ENCODE measurements at regions of chr6 and their contacts with region 1.

Region 1: GRCh38 chr6:25070547-25071366 is 135.0 kb upstream of the RIPOR2 start:
- DNase-seq: peak; percentile 71 to 93 (median 76)
- ATAC-seq: peak; percentile 99
- H3K4me3 ChIP-seq: no peak overlapping the region
- H3K4me3 Mint-ChIP-seq: peak overlapping the region; percentile 14
- H3K27ac ChIP-seq: no peak overlapping the region
- H3K27ac Mint-ChIP-seq: peak overlapping the region; percentile 75
- H3K4me1 ChIP-seq: peaks cover 4% of the 10 kb centered on the region
- H3K4me1 Mint-ChIP-seq: peaks cover 10% of the 10 kb centered on the region
- H3K27me3 ChIP-seq: no peaks in the 10 kb centered on the region
- H3K27me3 Mint-ChIP-seq: no peaks in the 10 kb centered on the region
- CTCF ChIP-seq: peak; percentile 98

Region 2: GRCh38 chr6:24774696-24775519 is 295.8 kb before region 1 on chr6 and contains the start of gene GMNN:
- CTCF ChIA-PET with region 1: interaction called, 3 read pairs
- POLR2A ChIA-PET with region 1: no interaction called
- intact Hi-C with region 1: loop called in 1 of 2 experiments (anchors 5 kb)
- DNase-seq: peak; percentile 95 to 99 (median 97)
- ATAC-seq: peak; percentile 83
- H3K4me3 ChIP-seq: peak within 1 kb of the TSS; percentile 99
- H3K4me3 Mint-ChIP-seq: peak within 1 kb of the TSS; percentile 99
- H3K27ac ChIP-seq: peak within 1 kb of the TSS; percentile 87 to 94
- H3K27ac Mint-ChIP-seq: peak within 1 kb of the TSS; percentile 99
- H3K4me1 ChIP-seq: peaks cover 15% of the 10 kb centered on the region
- H3K4me1 Mint-ChIP-seq: peaks cover 32% of the 10 kb centered on the region
- H3K27me3 ChIP-seq: no peaks in the 10 kb centered on the region
- H3K27me3 Mint-ChIP-seq: no peaks in the 10 kb centered on the region
- CTCF ChIP-seq: no peak
- total RNA-seq, gene GMNN: 10.1 to 10.5 TPM

Region 3: DNA sequence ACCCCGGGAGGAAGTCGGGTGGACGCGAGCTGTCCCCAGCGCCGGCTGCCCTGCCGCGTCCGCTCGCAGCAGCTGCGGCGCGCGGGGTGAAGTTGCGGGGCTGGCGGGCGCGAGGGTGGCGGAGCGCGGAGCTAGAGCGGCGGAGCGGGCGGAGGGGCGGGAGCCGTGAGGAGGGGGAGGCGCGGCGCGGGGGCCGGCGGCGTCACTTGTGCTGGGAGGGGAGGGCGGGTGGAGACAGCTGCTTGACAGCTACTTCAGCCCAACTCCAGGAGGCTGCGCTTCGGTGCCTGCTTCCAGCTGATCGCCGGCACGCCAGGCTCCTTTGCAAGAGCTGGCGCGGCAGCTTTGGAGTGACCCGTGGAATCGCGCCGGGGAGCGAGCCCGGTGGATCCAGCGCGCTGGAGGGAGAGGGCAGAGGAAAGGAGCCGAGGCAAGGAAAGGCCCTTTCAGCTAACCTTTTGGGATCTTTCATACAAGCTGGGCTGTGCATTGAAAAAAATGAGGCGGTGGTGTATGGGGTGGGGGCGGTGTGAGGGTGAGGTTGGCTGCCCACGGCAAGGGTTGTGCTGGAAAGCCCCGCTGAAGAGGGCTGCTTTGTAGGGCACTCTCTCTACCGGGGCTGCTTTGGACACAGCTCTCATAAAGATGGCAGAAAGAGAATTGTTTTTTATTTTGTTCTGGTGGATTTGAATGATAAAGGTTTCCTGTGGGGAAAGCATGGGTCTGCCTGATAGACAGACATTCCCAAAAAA is 159.6 kb before region 1 on chr6:
- CTCF ChIA-PET with region 1: interaction called, 4 read pairs
- POLR2A ChIA-PET with region 1: no interaction called
- intact Hi-C with region 1: loop called in 1 of 2 experiments (anchors 10 kb)
- DNase-seq: peak in 13 of 14 experiments; percentile 27 to 79 (median 58)
- ATAC-seq: peak; percentile 46
- H3K4me3 ChIP-seq: peak overlapping the region; percentile 65
- H3K4me3 Mint-ChIP-seq: peak overlapping the region; percentile 95
- H3K27ac ChIP-seq: peak overlapping the region; percentile 73 to 88
- H3K27ac Mint-ChIP-seq: peak overlapping the region; percentile 97
- H3K4me1 ChIP-seq: peaks cover 93% of the 10 kb centered on the region
- H3K4me1 Mint-ChIP-seq: peaks cover 99% of the 10 kb centered on the region
- H3K27me3 ChIP-seq: no peaks in the 10 kb centered on the region
- H3K27me3 Mint-ChIP-seq: no peaks in the 10 kb centered on the region
- CTCF ChIP-seq: no peak

Region 4: DNA sequence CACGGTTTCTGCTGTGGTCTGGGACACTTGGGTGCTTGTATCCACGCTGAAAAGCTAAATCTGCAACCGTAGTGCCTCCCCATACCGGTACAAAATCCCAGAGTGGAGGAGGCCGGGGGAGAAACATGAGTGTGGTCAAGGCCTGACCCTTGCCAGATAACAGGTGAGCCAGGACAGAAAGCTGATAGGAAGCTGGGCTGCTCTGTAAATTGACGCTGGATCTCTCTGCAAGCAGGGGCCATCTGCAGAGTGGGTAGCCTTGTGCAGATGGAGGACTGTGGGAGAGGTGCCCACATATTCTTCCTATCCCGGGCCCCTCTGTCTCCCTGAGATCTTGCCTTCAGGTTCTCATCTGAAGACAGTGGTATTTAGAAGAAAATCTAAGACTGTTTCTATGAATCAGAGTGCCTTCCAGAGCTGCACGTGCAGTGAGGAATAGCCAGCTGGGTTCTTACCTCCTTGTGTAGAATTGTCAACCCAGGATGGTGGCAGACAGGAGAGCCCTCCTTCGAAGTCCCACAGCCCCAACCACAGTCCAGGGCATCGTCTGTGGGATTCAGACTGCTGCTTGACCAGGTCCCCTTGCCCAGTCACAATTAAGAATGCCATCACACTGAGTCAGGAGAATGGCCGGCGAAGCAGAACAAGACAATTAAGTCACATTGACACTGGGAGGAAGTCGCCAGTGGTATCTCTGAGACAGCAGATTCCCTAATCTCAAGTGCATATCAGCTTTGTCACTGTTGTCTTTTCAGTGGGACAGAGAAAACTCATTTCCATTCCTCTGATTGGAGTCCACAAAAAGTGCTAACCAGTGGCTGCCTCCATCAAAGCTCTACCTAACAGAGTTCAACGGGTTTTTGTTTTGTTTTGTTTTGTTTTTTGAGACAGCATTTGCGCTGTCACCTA is 35.0 kb before region 1 on chr6:
- CTCF ChIA-PET with region 1: interaction called, 17 read pairs
- POLR2A ChIA-PET with region 1: interaction called, 6 read pairs
- intact Hi-C with region 1: no loop called
- DNase-seq: peak in 4 of 14 experiments; percentile 27 to 64 (median 58)
- ATAC-seq: peak; percentile 47
- H3K4me3 ChIP-seq: peak overlapping the region; percentile 50
- H3K4me3 Mint-ChIP-seq: peak overlapping the region; percentile 83
- H3K27ac ChIP-seq: peak overlapping the region; percentile 48 to 75
- H3K27ac Mint-ChIP-seq: peak overlapping the region; percentile 96
- H3K4me1 ChIP-seq: peaks cover 50% of the 10 kb centered on the region
- H3K4me1 Mint-ChIP-seq: peaks cover 66% of the 10 kb centered on the region
- H3K27me3 ChIP-seq: no peaks in the 10 kb centered on the region
- H3K27me3 Mint-ChIP-seq: no peaks in the 10 kb centered on the region
- CTCF ChIP-seq: no peak

Region 5: GRCh38 chr6:25053875-25054371 is 16.8 kb before region 1 on chr6:
- CTCF ChIA-PET with region 1: interaction called, 14 read pairs
- POLR2A ChIA-PET with region 1: interaction called, 3 read pairs
- intact Hi-C with region 1: no loop called
- DNase-seq: peak in 4 of 14 experiments; percentile 14 to 75 (median 66)
- ATAC-seq: no peak
- H3K4me3 ChIP-seq: no peak overlapping the region
- H3K4me3 Mint-ChIP-seq: no peak overlapping the region
- H3K27ac ChIP-seq: peak overlapping the region in 1 of 2 donors; percentile 19
- H3K27ac Mint-ChIP-seq: peak overlapping the region; percentile 40
- H3K4me1 ChIP-seq: peaks cover 76% of the 10 kb centered on the region
- H3K4me1 Mint-ChIP-seq: peaks cover 72% of the 10 kb centered on the region
- H3K27me3 ChIP-seq: no peaks in the 10 kb centered on the region
- H3K27me3 Mint-ChIP-seq: no peaks in the 10 kb centered on the region
- CTCF ChIP-seq: no peak

Measured in CD4-positive, alpha-beta T cell (primary cell).